ENCODE measurements at regions of chr3 and their contacts with region 1.

Region 1: DNA sequence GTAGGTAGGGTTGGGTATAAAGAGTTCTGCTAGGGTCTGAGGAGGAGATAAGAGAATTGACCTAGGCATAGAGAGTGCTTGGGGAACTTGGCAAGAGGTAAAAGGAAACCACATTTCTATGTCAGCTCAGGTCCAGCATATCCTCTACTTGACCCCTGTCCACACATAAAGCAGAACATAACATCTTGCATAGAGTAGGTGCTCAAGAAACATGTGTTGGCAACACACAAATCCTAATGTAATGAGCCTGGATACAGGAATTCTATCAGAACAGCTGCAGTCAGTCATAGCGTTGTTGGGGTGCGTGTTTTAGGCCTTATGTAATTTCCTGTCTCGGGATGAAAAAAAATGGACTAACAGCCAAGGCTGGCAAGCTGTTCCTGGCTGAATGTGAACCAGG is 35.0 kb upstream of the PLCL2 start:
- DNase-seq: no peak
- H3K4me3 ChIP-seq: no peak overlapping the region
- H3K27ac ChIP-seq: no peak overlapping the region
- H3K4me1 ChIP-seq: no peaks in the 10 kb centered on the region
- H3K27me3 ChIP-seq: no peaks in the 10 kb centered on the region
- CTCF ChIP-seq: no peak

Region 2: GRCh38 chr3:16600780-16601539 is 248.8 kb before region 1 on chr3:
- dilution Hi-C with region 1: loop called (anchors 25 kb)
- DNase-seq: peak; percentile 28
- H3K4me3 ChIP-seq: no peak overlapping the region
- H3K27ac ChIP-seq: no peak overlapping the region
- H3K4me1 ChIP-seq: no peaks in the 10 kb centered on the region
- H3K27me3 ChIP-seq: no peaks in the 10 kb centered on the region
- CTCF ChIP-seq: peak; percentile 58 to 66 (median 66)

Region 3: DNA sequence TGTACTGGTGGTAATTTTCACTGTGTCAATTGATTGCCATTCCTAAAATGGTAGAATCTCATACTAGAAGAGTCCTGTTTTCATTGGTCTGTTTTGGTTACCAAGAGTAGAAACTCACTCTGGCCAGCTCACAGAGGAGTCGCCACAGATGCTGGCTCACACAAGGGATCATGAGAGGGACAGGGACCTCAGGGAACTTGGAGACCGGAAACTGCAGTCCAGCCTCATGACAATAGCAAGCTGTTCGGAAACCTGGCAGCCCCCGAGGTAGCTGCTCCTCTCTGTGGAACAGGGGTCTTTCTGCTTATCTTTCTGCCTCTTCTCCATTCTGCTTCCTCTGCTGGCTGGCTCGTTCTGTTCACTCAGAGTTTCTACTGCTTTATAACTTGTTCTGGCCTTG is 227.8 kb after region 1 on chr3:
- dilution Hi-C with region 1: no loop called
- DNase-seq: no peak
- H3K4me3 ChIP-seq: no peak overlapping the region
- H3K27ac ChIP-seq: no peak overlapping the region
- H3K4me1 ChIP-seq: no peaks in the 10 kb centered on the region
- H3K27me3 ChIP-seq: no peaks in the 10 kb centered on the region
- CTCF ChIP-seq: no peak

Measured in keratinocyte (primary cell).